ENCODE measurements at regions of chr13 and their contacts with region 1.

Region 1: GRCh38 chr13:27549406-27549981 is 70.8 kb downstream of the LNX2 start:
- DNase-seq: peak; percentile 86
- ATAC-seq: peak; percentile 95
- H3K4me3 ChIP-seq: peak overlapping the region; percentile 15; the same call in 1 of the 2 replicates
- H3K27ac ChIP-seq: peak overlapping the region; percentile 55
- H3K4me1 ChIP-seq: peaks cover 20% of the 10 kb centered on the region
- H3K27me3 ChIP-seq: no peaks in the 10 kb centered on the region
- CTCF ChIP-seq: no peak

Region 2: GRCh38 chr13:27504128-27504867 is 45.2 kb before region 1 on chr13:
- CTCF ChIA-PET with region 1: interaction called, 12 read pairs
- POLR2A ChIA-PET with region 1: no interaction called
- intact Hi-C with region 1: no loop called
- DNase-seq: no peak
- ATAC-seq: no peak
- H3K4me3 ChIP-seq: no peak overlapping the region
- H3K27ac ChIP-seq: no peak overlapping the region
- H3K4me1 ChIP-seq: no peaks in the 10 kb centered on the region
- H3K27me3 ChIP-seq: peaks cover 15% of the 10 kb centered on the region
- CTCF ChIP-seq: no peak

Region 3: DNA sequence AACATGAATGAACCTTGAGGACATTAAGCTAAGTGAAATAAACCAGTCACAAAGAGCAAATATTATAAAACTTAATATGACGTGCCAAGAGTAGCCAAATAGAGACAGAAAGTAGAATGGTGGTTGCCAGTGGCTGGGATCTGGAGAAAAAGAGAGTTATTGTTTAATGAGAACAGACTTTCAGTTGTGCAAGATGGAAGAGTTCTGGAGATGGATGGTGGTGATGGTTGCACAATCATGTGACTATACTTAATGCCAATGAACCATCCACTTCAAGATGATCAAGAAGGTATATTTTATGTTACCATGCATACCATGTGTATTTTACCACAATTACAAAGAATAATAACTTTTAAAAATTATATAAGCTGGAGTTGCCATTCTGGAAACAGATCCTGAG is 33.4 kb before region 1 on chr13:
- CTCF ChIA-PET with region 1: no interaction called
- POLR2A ChIA-PET with region 1: no interaction called
- intact Hi-C with region 1: no loop called
- DNase-seq: no peak
- ATAC-seq: no peak
- H3K4me3 ChIP-seq: no peak overlapping the region
- H3K27ac ChIP-seq: no peak overlapping the region
- H3K4me1 ChIP-seq: no peaks in the 10 kb centered on the region
- H3K27me3 ChIP-seq: peaks cover 16% of the 10 kb centered on the region
- CTCF ChIP-seq: no peak

Measured in PC-3 (cell line).